Activated CD4-positive, alpha-beta T cell treated with anti-CD3 and anti-CD28 coated beads for 36 hours (primary cell): ENCODE measurements at regions of chr5 and their contacts with region 1.

Region 1: GRCh38 chr5:177006265-177006972 is at the start of gene UIMC1:
- DNase-seq: peak; percentile 96
- ATAC-seq: peak; percentile 90
- H3K4me3 Mint-ChIP-seq: peak within 1 kb of the TSS; percentile 87
- H3K27ac Mint-ChIP-seq: peak within 1 kb of the TSS; percentile 96
- H3K4me1 Mint-ChIP-seq: peaks cover 26% of the 10 kb centered on the region
- H3K27me3 Mint-ChIP-seq: no peaks in the 10 kb centered on the region
- total RNA-seq, gene UIMC1: 50.4 to 53.4 TPM

Region 2: DNA sequence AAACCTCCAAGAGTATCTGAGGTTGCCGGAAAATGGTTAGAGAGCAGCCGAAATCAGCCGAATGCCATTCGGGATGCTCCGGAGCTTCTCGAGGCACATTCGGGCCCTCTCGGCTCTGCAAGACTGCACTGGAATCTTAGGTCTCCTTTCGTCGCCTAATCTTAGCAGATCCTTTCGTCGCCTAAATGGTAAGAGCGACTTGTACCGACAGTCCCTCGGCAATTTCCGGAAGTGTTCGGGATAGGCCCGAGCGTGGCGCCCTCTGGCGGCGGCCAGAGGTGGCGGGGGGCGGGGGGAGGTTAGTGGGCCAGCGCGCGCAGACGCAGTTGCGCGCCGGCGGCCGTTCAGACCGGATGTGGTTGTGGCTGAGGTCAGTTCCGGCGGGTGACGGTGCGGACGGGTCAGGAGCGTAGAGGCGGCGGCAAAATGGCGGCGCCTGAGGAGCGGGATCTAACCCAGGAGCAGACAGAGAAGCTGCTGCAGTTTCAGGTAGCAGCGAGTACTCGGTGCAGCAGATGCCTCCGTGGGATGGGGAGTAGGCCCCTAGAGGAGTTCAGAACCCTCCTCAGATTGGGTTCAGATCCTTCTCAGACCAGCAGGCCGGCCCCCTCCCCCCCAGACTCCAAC is 558.3 kb before region 1 on chr5 and contains the start of gene FAF2:
- CTCF ChIA-PET with region 1: no interaction called
- POLR2A ChIA-PET with region 1: no interaction called
- intact Hi-C with region 1: loop called in 1 of 2 experiments (anchors 1 kb)
- DNase-seq: peak; percentile 98
- ATAC-seq: peak; percentile 98
- H3K4me3 Mint-ChIP-seq: peak within 1 kb of the TSS; percentile 90
- H3K27ac Mint-ChIP-seq: peak within 1 kb of the TSS; percentile 97
- H3K4me1 Mint-ChIP-seq: peaks cover 31% of the 10 kb centered on the region
- H3K27me3 Mint-ChIP-seq: no peaks in the 10 kb centered on the region
- total RNA-seq, gene FAF2: 37.6 to 44.8 TPM

Region 3: GRCh38 chr5:176995896-176996754 is 10.3 kb before region 1 on chr5:
- CTCF ChIA-PET with region 1: interaction called, 12 read pairs
- POLR2A ChIA-PET with region 1: interaction called, 13 read pairs
- intact Hi-C with region 1: no loop called
- DNase-seq: no peak
- ATAC-seq: peak; percentile 78
- H3K4me3 Mint-ChIP-seq: no peak overlapping the region
- H3K27ac Mint-ChIP-seq: peak overlapping the region; percentile 69
- H3K4me1 Mint-ChIP-seq: peaks cover 41% of the 10 kb centered on the region
- H3K27me3 Mint-ChIP-seq: no peaks in the 10 kb centered on the region

Region 4: GRCh38 chr5:177133091-177133852 is 126.9 kb after region 1 on chr5 and contains the start of gene NSD1:
- CTCF ChIA-PET with region 1: interaction called, 3 read pairs
- POLR2A ChIA-PET with region 1: no interaction called
- intact Hi-C with region 1: loop called in 1 of 2 experiments (anchors 1 kb)
- DNase-seq: peak; percentile 95
- ATAC-seq: peak; percentile 81
- H3K4me3 Mint-ChIP-seq: peak within 1 kb of the TSS; percentile 91
- H3K27ac Mint-ChIP-seq: peak within 1 kb of the TSS; percentile 89
- H3K4me1 Mint-ChIP-seq: peaks cover 48% of the 10 kb centered on the region
- H3K27me3 Mint-ChIP-seq: no peaks in the 10 kb centered on the region
- total RNA-seq, gene NSD1: 65.6 to 68.2 TPM

Region 5: GRCh38 chr5:177554474-177555111 is 548.2 kb after region 1 on chr5 and contains the start of gene FAM193B:
- CTCF ChIA-PET with region 1: no interaction called
- POLR2A ChIA-PET with region 1: no interaction called
- intact Hi-C with region 1: loop called in 1 of 2 experiments (anchors 10 kb)
- DNase-seq: peak; percentile 98
- ATAC-seq: peak; percentile 99
- H3K4me3 Mint-ChIP-seq: peak within 1 kb of the TSS; percentile 80
- H3K27ac Mint-ChIP-seq: peak within 1 kb of the TSS; percentile 66
- H3K4me1 Mint-ChIP-seq: peaks cover 25% of the 10 kb centered on the region
- H3K27me3 Mint-ChIP-seq: no peaks in the 10 kb centered on the region
- total RNA-seq, gene FAM193B: 63.6 to 77.7 TPM